Caco-2 (cell line): ENCODE measurements at regions of chr12 and their contacts with region 1.

Region 1: DNA sequence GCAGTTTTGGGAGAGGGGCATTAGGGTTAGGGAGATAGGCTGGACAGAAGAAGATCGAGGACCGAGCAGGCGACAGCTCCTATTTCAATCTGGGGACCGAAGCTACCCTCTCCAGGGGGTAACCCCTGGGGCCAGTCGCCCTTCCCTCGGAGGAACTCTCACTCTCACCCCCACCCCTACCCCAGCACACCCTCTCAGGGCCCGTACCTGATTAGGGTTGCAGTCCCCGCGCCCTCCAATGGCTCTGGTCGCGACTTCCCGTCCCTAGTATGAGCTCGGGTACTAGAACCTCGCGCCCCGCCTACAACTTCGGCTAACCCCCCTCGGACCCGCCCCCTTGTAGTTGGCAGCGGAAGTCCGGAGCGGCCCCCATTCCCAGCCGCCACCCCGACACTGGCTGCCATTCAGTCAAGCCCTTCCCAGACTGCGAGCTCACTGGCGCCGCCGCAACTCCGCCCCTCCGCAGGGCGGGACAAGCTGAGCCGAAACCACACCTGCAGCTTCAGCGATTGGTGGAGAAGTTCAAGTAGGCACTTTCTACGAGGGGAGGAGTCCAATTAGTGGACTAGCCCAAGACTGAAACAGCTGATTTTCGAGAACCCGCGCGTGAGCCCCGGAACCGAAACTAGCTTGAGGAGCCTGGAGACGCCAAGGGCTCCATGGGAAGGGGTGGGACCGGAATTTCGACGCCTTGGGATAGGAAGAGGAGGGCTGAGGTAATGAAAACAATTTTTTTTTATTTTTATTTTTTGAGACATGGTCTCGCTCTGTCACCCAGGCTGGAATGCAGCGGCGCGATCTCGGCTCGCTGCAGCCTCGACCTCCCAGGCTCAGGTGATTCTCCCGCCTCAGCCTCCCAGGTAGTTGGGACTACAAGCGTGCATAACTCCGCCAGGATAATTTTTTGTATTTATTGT is at the start of gene STAT2:
- DNase-seq: peak; percentile 99
- H3K4me3 ChIP-seq: peak within 1 kb of the TSS; percentile 77
- H3K4me3 Mint-ChIP-seq: peak within 1 kb of the TSS; percentile 90
- H3K27ac Mint-ChIP-seq: peak within 1 kb of the TSS; percentile 94
- H3K4me1 ChIP-seq: 0 out of 2 replicates have a peak, but pooled peaks cover 3% of the 10 kb centered on the region
- H3K4me1 Mint-ChIP-seq: peaks cover 12% of the 10 kb centered on the region
- H3K27me3 ChIP-seq: no peaks in the 10 kb centered on the region
- H3K27me3 Mint-ChIP-seq: no peaks in the 10 kb centered on the region
- CTCF ChIP-seq: no peak
- total RNA-seq, gene STAT2: 76.7 and 79.5 TPM in 2 replicates

Region 2: GRCh38 chr12:56224102-56224701 is 135.9 kb before region 1 on chr12 and contains the start of gene NABP2:
- CTCF ChIA-PET with region 1: no interaction called
- POLR2A ChIA-PET with region 1: interaction called, 10 read pairs
- intact Hi-C with region 1: no loop called
- DNase-seq: peak; percentile 98
- H3K4me3 ChIP-seq: peak within 1 kb of the TSS; percentile 72
- H3K4me3 Mint-ChIP-seq: peak within 1 kb of the TSS; percentile 99
- H3K27ac Mint-ChIP-seq: peak within 1 kb of the TSS; percentile 98
- H3K4me1 ChIP-seq: peaks cover 6% of the 10 kb centered on the region
- H3K4me1 Mint-ChIP-seq: peaks cover under 1% of the 10 kb centered on the region
- H3K27me3 ChIP-seq: no peaks in the 10 kb centered on the region
- H3K27me3 Mint-ChIP-seq: no peaks in the 10 kb centered on the region
- CTCF ChIP-seq: peak; percentile 82 to 89
- total RNA-seq, gene NABP2: 32.1 and 37.7 TPM in 2 replicates

Region 3: GRCh38 chr12:56315622-56316473 is 44.3 kb before region 1 on chr12 and contains the start of gene CNPY2:
- CTCF ChIA-PET with region 1: interaction called, 7 read pairs
- POLR2A ChIA-PET with region 1: interaction called, 30 read pairs
- intact Hi-C with region 1: loop called (anchors 1 kb)
- DNase-seq: peak; percentile 98 to 99
- H3K4me3 ChIP-seq: peak within 1 kb of the TSS; percentile 79
- H3K4me3 Mint-ChIP-seq: peak within 1 kb of the TSS; percentile 85
- H3K27ac Mint-ChIP-seq: peak within 1 kb of the TSS; percentile 96
- H3K4me1 ChIP-seq: peaks cover 4% of the 10 kb centered on the region; the same call in 1 of the 2 replicates
- H3K4me1 Mint-ChIP-seq: no peaks in the 10 kb centered on the region
- H3K27me3 ChIP-seq: no peaks in the 10 kb centered on the region
- H3K27me3 Mint-ChIP-seq: no peaks in the 10 kb centered on the region
- CTCF ChIP-seq: peak; percentile 22 to 27
- total RNA-seq, gene CNPY2: 204 and 208 TPM in 2 replicates

Region 4: DNA sequence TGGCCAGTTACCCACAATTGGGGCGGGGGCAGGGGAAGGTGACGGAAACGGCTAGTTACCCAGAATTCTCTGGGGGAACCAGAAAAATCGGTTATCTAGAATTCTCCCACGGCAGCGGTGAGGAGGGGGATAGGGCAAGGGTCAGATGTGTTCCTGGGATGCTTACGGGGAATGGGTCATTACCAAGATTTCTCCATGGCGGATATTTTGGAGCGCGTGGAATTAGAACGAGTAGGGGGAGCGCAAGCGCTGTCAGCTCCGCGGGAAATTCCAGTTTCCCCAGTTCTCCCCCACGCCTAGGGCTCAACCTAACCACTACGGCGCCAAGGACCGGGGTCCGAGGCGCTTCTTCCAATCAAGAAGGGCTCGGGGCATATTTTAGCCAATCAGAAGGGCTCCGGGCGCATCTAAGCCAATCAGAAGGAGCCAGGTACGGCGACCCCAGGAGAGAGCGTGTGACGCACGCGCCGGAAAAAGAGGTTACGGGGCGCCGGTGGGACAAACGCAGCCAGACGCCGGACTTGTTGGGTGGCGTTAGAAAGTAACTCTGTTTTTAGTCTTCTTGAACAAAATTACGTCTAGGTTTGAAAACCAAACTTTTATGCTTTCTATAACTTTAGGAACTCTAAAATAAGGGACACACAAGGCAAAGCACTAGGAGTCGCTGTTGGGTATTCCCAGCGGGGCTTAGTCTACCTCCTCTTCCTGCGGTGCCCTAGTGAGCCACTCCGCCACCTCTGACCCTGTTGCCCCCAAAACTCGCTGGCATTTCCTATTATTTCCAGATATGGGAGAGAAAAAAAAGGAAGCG is 26.2 kb before region 1 on chr12 and contains the start of gene PAN2:
- CTCF ChIA-PET with region 1: interaction called, 6 read pairs
- POLR2A ChIA-PET with region 1: interaction called, 9 read pairs
- intact Hi-C with region 1: loop called (anchors 1 kb)
- DNase-seq: peak; percentile 94 to 97
- H3K4me3 ChIP-seq: peak within 1 kb of the TSS; percentile 63
- H3K4me3 Mint-ChIP-seq: peak within 1 kb of the TSS; percentile 98
- H3K27ac Mint-ChIP-seq: peak within 1 kb of the TSS; percentile 99
- H3K4me1 ChIP-seq: peaks cover 17% of the 10 kb centered on the region
- H3K4me1 Mint-ChIP-seq: peaks cover 8% of the 10 kb centered on the region
- H3K27me3 ChIP-seq: no peaks in the 10 kb centered on the region
- H3K27me3 Mint-ChIP-seq: no peaks in the 10 kb centered on the region
- CTCF ChIP-seq: peak; percentile 65 to 77
- total RNA-seq, gene PAN2: 25.7 and 30.0 TPM in 2 replicates

Region 5: DNA sequence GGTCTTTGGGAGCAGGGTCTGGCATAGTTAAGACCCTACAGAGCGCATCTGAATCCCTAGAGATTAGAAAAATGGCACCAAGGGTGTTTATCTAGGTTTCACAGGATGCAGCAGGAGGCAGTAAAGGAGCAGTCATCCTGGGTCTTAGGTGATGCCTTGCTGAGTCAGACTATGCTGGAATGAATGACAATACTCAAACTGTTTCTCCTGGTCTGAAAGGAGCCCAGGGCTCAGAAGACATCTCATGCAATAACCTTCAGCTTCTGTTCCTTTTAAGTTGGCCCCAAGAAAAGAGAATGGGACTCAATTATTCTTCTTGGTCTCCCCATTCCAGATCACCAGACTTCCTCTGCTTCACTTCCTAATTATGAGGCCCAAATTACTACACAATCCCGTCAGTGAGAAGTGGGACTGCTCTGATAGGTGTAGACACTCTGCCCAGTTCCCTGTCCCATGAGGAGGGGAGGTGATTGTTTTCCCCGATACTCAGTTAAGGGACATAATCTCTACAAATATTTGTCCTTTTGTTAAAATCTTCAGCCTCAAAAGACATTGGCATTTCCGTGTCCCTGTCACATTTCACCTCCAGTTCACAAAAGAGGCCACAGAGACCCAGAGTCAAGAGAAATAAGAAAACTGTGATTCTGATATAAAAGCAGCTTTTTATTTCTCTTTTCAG is 17.3 kb after region 1 on chr12:
- CTCF ChIA-PET with region 1: interaction called, 8 read pairs
- POLR2A ChIA-PET with region 1: interaction called, 8 read pairs
- intact Hi-C with region 1: loop called (anchors 1 kb)
- DNase-seq: peak in 1 of 2 experiments; percentile 45
- H3K4me3 ChIP-seq: no peak overlapping the region
- H3K4me3 Mint-ChIP-seq: peak overlapping the region; percentile 4
- H3K27ac Mint-ChIP-seq: peak overlapping the region; percentile 61
- H3K4me1 ChIP-seq: peaks cover 25% of the 10 kb centered on the region
- H3K4me1 Mint-ChIP-seq: peaks cover 15% of the 10 kb centered on the region
- H3K27me3 ChIP-seq: no peaks in the 10 kb centered on the region
- H3K27me3 Mint-ChIP-seq: no peaks in the 10 kb centered on the region
- CTCF ChIP-seq: no peak

Region 6: GRCh38 chr12:56425193-56425592 is 65.1 kb after region 1 on chr12:
- CTCF ChIA-PET with region 1: no interaction called
- POLR2A ChIA-PET with region 1: no interaction called
- intact Hi-C with region 1: no loop called
- DNase-seq: no peak
- H3K4me3 ChIP-seq: no peak overlapping the region
- H3K4me3 Mint-ChIP-seq: no peak overlapping the region
- H3K27ac Mint-ChIP-seq: no peak overlapping the region
- H3K4me1 ChIP-seq: no peaks in the 10 kb centered on the region
- H3K4me1 Mint-ChIP-seq: no peaks in the 10 kb centered on the region
- H3K27me3 ChIP-seq: no peaks in the 10 kb centered on the region
- H3K27me3 Mint-ChIP-seq: no peaks in the 10 kb centered on the region
- CTCF ChIP-seq: no peak

Region 7: GRCh38 chr12:56448860-56449621 is 88.9 kb after region 1 on chr12 and contains the start of gene TIMELESS:
- CTCF ChIA-PET with region 1: interaction called, 5 read pairs
- POLR2A ChIA-PET with region 1: interaction called, 15 read pairs
- intact Hi-C with region 1: loop called (anchors 1 kb)
- DNase-seq: peak; percentile 85 to 92
- H3K4me3 ChIP-seq: peak within 1 kb of the TSS; percentile 65
- H3K4me3 Mint-ChIP-seq: peak within 1 kb of the TSS; percentile 83
- H3K27ac Mint-ChIP-seq: peak within 1 kb of the TSS; percentile 89
- H3K4me1 ChIP-seq: peaks cover 4% of the 10 kb centered on the region; the same call in 1 of the 2 replicates
- H3K4me1 Mint-ChIP-seq: peaks cover 16% of the 10 kb centered on the region
- H3K27me3 ChIP-seq: no peaks in the 10 kb centered on the region
- H3K27me3 Mint-ChIP-seq: no peaks in the 10 kb centered on the region
- CTCF ChIP-seq: no peak
- total RNA-seq, gene TIMELESS: 40.1 and 43.2 TPM in 2 replicates